ENCODE measurements at regions of chr6 and their contacts with region 1.

Region 1: DNA sequence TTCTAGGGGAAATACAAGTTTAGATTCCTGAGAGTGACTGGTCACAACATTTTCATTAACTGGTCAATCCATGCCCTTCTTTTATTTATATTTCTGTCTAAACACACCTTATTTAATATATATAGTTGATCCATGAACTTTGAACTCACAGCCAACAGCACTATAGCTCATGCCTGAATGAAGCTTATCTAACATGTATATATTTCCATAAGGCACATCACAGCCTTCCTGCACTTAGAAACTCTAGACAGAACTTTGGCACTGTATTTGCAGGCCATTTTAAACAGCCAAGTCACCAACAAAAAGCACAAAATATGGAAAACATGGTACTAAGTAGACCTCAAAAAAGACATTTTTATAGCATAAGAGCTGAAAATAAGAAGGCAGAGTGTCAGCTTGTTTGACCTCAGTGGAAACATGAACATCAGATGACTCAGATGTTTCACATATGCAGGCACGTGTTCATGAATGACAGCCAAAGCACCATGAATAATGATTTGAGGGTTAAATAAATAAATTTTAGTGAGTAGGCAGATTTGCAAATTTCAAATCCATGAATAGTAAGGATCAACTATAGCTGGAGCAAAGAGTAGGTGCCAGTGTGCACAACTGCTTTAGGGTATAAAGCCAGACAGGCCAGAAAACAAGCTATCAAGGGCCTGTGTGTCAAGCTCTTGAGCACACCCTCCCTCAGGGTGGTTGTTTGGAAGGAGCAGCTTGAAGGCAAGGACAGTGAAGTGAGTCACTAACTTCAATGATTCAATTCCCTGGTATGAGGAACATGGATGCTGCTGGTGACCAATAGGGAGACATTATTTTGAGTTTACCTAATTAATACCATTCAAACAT is 88.9 kb upstream of the NT5E start:
- DNase-seq: peak; percentile 94
- ATAC-seq: peak; percentile 94
- H3K4me3 ChIP-seq: no peak overlapping the region
- H3K27ac ChIP-seq: peak overlapping the region; percentile 34
- H3K4me1 ChIP-seq: peaks cover 19 to 70% of the 10 kb centered on the region in 2 experiments
- H3K27me3 ChIP-seq: no peaks in the 10 kb centered on the region
- CTCF ChIP-seq: no peak
- POLR2A ChIP-seq: no peak
- RAD21 ChIP-seq: peak; percentile 32; the same call in 1 of the 2 replicates

Region 2: DNA sequence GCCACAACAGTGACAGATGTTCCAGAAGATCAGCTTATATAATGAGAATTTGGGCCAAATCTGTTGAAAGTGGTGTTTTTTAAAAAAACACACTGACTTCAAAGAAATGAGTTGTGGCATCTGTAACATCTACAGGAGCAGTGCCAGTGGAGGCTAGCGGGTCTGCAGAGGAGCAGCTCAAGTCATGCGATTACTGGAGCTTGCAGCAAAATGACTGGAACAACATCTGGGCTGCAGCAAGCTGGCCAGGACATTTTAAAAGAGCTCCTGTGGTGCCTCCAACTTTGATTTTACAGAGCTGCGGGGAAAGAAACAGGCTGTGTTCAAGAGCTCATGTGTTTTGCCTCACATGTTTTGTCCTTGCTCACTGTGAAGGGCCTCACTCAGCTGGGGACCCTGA is 653.8 kb before region 1 on chr6:
- CTCF ChIA-PET with region 1: no interaction called
- POLR2A ChIA-PET with region 1: no interaction called
- RAD21 ChIA-PET with region 1: no interaction called
- intact Hi-C with region 1: no loop called
- DNase-seq: no peak
- ATAC-seq: no peak
- H3K4me3 ChIP-seq: no peak overlapping the region
- H3K27ac ChIP-seq: no peak overlapping the region
- H3K4me1 ChIP-seq: no peaks in the 10 kb centered on the region
- H3K27me3 ChIP-seq: no peaks in the 10 kb centered on the region
- CTCF ChIP-seq: no peak
- POLR2A ChIP-seq: no peak
- RAD21 ChIP-seq: no peak

Region 3: GRCh38 chr6:85404502-85405174 is 43.6 kb after region 1 on chr6:
- CTCF ChIA-PET with region 1: no interaction called
- POLR2A ChIA-PET with region 1: interaction called, 5 read pairs
- RAD21 ChIA-PET with region 1: no interaction called
- intact Hi-C with region 1: loop called (anchors 5 kb)
- DNase-seq: peak; percentile 43
- ATAC-seq: peak; percentile 64
- H3K4me3 ChIP-seq: peak overlapping the region in 1 of 2 experiments; percentile 29; a peak in 1 of 4 replicates
- H3K27ac ChIP-seq: peak overlapping the region; percentile 23
- H3K4me1 ChIP-seq: peaks cover 24 to 63% of the 10 kb centered on the region in 2 experiments
- H3K27me3 ChIP-seq: no peaks in the 10 kb centered on the region
- CTCF ChIP-seq: no peak
- POLR2A ChIP-seq: no peak
- RAD21 ChIP-seq: 0 out of 2 replicates have a peak, but pooled peaks have one; percentile 15

Region 4: GRCh38 chr6:85449818-85450759 is 89.1 kb after region 1 on chr6 and contains the start of gene NT5E:
- CTCF ChIA-PET with region 1: no interaction called
- POLR2A ChIA-PET with region 1: interaction called, 18 read pairs
- RAD21 ChIA-PET with region 1: interaction called in 1 of 2 experiments, 3 read pairs
- intact Hi-C with region 1: no loop called
- DNase-seq: no peak
- ATAC-seq: peak; percentile 90
- H3K4me3 ChIP-seq: peak within 1 kb of the TSS; percentile 86 to 92
- H3K27ac ChIP-seq: peak within 1 kb of the TSS; percentile 70
- H3K4me1 ChIP-seq: peaks cover 20 to 57% of the 10 kb centered on the region in 2 experiments; a peak in 3 of 4 replicates
- H3K27me3 ChIP-seq: no peaks in the 10 kb centered on the region
- CTCF ChIP-seq: no peak; a peak in 1 of 6 replicates
- POLR2A ChIP-seq: no peak
- RAD21 ChIP-seq: 0 out of 2 replicates have a peak, but pooled peaks have one; percentile 19
- total RNA-seq, gene NT5E: 68.2 TPM

Region 5: DNA sequence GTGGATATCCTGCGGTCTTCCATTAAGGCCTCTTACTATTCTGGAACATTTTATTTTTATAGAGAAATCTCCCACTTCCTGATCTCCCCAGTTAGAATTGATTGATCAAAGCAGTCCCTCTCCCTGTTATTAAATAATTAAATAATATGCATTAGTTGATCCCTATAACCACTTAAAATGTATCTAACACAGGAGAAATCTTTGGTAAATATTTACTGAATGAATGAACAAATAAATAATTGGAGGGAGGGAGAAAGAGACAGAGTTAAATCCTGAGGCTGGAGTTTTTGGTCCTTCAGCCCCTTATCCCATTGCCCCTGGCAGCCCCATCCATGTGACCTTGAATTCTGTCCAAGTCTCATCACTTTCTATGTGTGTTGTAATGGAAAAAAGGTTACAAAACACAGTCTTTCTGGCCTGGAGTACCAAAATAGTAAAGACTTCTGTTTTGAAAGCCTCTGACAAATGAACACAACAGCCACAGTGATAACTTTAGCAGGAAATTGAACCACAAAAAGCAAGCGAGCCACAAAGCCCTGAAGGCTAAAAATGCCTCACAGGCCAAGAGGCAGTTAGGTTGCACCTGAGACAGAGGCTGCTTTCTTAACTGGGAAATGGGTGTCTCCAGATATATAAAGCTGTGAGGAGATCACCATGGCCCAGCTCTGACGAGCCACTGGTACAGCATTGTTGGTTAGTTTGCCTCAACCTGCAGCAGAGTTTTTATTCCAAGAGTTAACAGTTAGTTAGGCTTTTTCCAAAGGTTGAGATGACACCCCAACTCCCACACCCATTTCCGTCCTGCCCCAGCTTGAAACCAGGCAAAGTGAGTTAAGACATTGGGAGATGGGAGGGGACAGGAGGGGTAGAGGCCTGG is 100.1 kb after region 1 on chr6:
- CTCF ChIA-PET with region 1: no interaction called
- POLR2A ChIA-PET with region 1: interaction called, 27 read pairs
- RAD21 ChIA-PET with region 1: interaction called in 1 of 2 experiments, 4 read pairs
- intact Hi-C with region 1: loop called (anchors 1 kb)
- DNase-seq: no peak
- ATAC-seq: no peak
- H3K4me3 ChIP-seq: no peak overlapping the region
- H3K27ac ChIP-seq: no peak overlapping the region
- H3K4me1 ChIP-seq: peaks cover 61 to 100% of the 10 kb centered on the region in 2 experiments
- H3K27me3 ChIP-seq: no peaks in the 10 kb centered on the region
- CTCF ChIP-seq: no peak
- POLR2A ChIP-seq: no peak
- RAD21 ChIP-seq: no peak

Measured in HCT116 (cell line).